Spleen (tissue), 13 donors: ENCODE measurements at regions of chr19 and their contacts with region 1.

Region 1: DNA sequence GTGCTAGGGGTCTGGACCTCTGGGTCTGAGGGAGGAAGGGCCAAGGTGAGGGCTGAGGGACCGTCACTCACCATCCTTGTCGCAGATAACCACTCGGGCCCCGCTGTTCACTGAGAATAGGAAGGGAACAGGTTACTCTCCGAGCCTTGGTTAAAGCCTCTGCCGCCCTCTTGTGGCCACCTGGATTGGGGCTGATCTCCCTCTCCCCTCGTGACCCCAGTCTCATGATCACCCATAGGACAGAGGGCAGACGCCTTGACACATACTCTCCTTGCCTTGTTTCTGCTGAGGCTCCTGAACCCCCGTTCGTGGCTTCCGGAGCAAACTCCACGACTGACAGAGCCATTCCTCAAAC is 580 bp downstream of the HSD17B14 start:
- DNase-seq: peak; percentile 96
- H3K4me3 ChIP-seq: peak overlapping the region in 7 of 8 donors; percentile 1 to 68 (median 35)
- H3K27ac ChIP-seq: peak overlapping the region in 6 of 8 donors; percentile 20 to 68 (median 56)
- H3K4me1 ChIP-seq: peaks cover 4 to 28% (median 21%) of the 10 kb centered on the region in 6 donors
- H3K27me3 ChIP-seq: peaks cover 0 to 16% (median 0%) of the 10 kb centered on the region in 7 donors
- CTCF ChIP-seq: peak; percentile 85 to 96 (median 93)
- POLR2A ChIP-seq: no peak

Region 2: DNA sequence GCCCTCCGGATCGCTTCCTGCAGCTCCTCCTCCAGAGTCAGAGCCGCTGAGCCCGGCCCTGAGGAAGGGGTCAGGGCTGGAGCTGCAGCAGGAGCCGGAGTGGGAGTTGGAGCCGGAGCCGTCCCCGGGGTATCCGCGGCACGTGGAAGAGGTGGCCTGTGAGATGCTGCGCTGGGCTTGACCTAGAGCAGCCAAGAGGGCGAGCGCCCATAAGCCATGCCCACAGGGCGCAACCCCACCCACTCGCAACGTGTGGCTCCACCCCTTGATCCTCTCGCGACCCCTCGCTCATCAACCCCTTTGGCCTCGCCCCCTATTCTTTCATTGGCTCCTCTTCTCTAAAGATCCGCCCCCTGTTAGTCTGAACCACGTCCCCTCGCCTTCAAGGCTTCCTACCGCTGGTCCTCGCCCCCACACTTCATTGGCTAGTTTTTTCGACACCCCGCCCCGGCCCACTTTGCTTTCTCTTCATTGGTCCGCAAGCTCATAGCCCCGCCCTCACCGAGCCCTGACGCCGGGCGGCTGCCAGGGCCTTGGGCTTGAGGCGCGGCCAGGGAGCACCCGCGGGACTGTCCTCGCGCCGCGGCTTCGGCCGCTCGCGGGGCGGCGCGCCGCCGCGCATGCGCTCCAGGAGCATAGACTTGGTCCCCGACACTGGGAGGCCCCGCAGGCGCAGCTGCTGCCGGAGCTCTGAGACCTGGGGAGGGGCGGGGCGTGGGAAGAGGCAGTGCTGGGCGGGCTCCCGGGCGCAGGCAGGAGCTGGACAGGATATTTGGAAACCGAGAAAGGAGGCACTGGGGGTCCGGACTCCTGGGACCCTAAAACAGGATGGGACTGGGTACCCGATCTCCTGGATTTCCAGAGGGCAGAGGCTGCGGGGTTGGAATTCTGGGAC is 121.6 kb before region 1 on chr19:
- intact Hi-C with region 1: no loop called
- DNase-seq: peak; percentile 97
- H3K4me3 ChIP-seq: peak overlapping the region; percentile 45 to 78 (median 66)
- H3K27ac ChIP-seq: peak overlapping the region; percentile 55 to 88 (median 86)
- H3K4me1 ChIP-seq: peaks cover 16 to 62% (median 39%) of the 10 kb centered on the region in 6 donors
- H3K27me3 ChIP-seq: no peaks in the 10 kb centered on the region
- CTCF ChIP-seq: peak in 3 of 11 experiments; percentile 5 to 39 (median 17)
- POLR2A ChIP-seq: no peak

Region 3: GRCh38 chr19:48780631-48781391 is 54.9 kb before region 1 on chr19:
- intact Hi-C with region 1: loop called (anchors 5 kb)
- DNase-seq: no peak
- H3K4me3 ChIP-seq: no peak overlapping the region
- H3K27ac ChIP-seq: peak overlapping the region in 7 of 8 donors; percentile 4 to 73 (median 64)
- H3K4me1 ChIP-seq: peaks cover 11 to 30% (median 20%) of the 10 kb centered on the region in 6 donors
- H3K27me3 ChIP-seq: no peaks in the 10 kb centered on the region
- CTCF ChIP-seq: no peak
- POLR2A ChIP-seq: no peak